CD8-positive, alpha-beta T cell (primary cell): ENCODE measurements at regions of chr11 and their contacts with region 1.

Region 1: DNA sequence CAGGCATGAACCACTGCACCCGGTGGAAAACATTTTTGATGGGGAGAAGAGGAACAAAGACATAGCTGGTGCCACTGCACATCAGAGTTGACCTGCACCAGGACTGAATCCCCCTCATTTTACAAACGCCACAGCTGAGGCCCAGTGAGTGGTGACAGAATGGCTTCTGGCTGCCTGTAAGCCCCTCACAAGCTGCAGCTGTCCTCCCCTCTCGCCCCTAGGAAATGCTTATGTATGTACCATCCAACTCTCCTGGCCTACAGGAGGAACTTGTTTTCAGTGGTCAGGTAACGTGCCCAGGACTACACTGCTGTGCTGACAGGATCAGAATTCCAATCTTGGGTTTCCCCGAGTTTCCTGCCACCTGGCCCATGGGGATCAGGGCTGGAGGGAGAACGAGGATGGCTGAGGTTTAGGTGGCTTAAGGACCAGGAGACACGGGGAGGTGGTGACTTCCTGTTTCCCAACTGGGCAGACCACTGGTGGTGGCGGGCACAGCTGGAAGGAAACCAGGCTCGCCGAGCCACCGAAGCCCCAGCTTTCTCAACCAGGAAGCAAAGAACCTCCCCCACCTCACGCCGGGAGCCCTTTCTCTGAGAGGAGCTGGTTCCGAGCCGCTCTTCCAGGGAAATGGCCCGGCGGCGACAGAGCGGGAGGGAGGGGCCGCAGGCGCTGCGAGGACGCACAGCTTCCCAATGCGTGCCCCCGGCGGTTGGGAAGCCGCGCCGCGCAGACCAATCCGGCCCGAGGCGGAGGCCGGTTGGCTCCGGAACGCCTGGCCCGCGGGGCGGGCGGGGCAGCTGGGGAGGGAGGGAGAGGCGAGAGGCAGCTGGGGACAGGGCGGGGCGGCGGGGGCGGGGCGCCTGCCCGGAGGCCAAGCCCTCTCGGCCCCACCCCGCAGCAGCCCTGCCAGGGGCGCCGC is 1.0 kb upstream of the LRFN4 start:
- DNase-seq: peak in 7 of 9 experiments; percentile 66 to 86 (median 77)
- ATAC-seq: peak; percentile 74
- H3K4me3 ChIP-seq: peak overlapping the region; percentile 62 to 80
- H3K4me3 Mint-ChIP-seq: peak overlapping the region; percentile 80
- H3K27ac ChIP-seq: peak overlapping the region; percentile 21 to 47
- H3K27ac Mint-ChIP-seq: peak overlapping the region; percentile 50
- H3K4me1 ChIP-seq: peaks cover 6% of the 10 kb centered on the region
- H3K4me1 Mint-ChIP-seq: peaks cover 8% of the 10 kb centered on the region
- H3K27me3 ChIP-seq: no peaks in the 10 kb centered on the region
- H3K27me3 Mint-ChIP-seq: no peaks in the 10 kb centered on the region
- CTCF ChIP-seq: no peak

Region 2: DNA sequence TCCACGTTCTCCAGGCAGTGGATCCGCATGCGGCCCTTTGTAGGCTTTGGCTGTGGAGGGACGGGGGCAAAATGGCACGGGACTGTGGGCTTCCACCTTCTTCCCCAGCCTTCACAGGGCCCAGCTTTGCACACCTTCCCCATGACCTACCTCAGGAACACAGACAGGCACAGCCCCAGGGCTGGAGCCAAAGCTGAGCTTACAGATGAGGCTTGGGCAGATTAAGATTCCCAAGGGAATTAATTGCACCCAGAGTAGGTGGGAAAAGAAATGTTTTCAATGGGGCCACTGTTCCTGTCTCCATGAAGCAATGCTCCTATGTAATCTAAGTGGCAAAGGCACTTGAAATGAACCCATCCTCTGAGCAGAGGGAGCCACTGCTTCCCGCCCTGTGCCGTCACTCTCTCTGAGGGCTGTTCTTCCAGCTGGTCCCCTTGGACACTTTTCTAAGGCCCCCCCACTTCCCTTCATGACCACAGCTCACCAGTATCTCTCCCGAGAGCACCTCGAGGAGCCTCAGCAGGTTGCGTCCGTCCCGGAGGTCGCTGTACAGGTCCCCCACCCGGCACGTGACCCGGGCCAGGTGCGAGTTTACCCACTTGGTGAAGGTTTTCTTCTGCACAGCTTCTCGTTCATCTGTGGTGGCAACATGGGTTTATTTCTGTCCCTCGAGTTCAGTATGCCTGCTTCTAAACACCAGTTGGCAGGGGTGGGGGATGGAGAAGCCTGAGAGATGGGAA is 140.3 kb before region 1 on chr11:
- CTCF ChIA-PET with region 1: no interaction called
- POLR2A ChIA-PET with region 1: no interaction called
- intact Hi-C with region 1: no loop called
- DNase-seq: no peak
- ATAC-seq: no peak
- H3K4me3 ChIP-seq: no peak overlapping the region
- H3K4me3 Mint-ChIP-seq: no peak overlapping the region
- H3K27ac ChIP-seq: no peak overlapping the region
- H3K27ac Mint-ChIP-seq: no peak overlapping the region
- H3K4me1 ChIP-seq: no peaks in the 10 kb centered on the region
- H3K4me1 Mint-ChIP-seq: peaks cover 2% of the 10 kb centered on the region
- H3K27me3 ChIP-seq: peaks cover 0 to 3% of the 10 kb centered on the region in 2 experiments
- H3K27me3 Mint-ChIP-seq: peaks cover 43% of the 10 kb centered on the region
- CTCF ChIP-seq: no peak

Region 3: GRCh38 chr11:66744485-66745340 is 111.1 kb before region 1 on chr11:
- CTCF ChIA-PET with region 1: no interaction called
- POLR2A ChIA-PET with region 1: no interaction called
- intact Hi-C with region 1: loop called in 1 of 2 experiments (anchors 5 kb)
- DNase-seq: peak; percentile 76 to 93 (median 87)
- ATAC-seq: peak; percentile 87
- H3K4me3 ChIP-seq: peak overlapping the region; percentile 81 to 92
- H3K4me3 Mint-ChIP-seq: peak overlapping the region; percentile 90
- H3K27ac ChIP-seq: peak overlapping the region; percentile 49 to 71
- H3K27ac Mint-ChIP-seq: peak overlapping the region; percentile 75
- H3K4me1 ChIP-seq: peaks cover 5% of the 10 kb centered on the region
- H3K4me1 Mint-ChIP-seq: peaks cover 3% of the 10 kb centered on the region
- H3K27me3 ChIP-seq: no peaks in the 10 kb centered on the region
- H3K27me3 Mint-ChIP-seq: no peaks in the 10 kb centered on the region
- CTCF ChIP-seq: no peak

Region 4: DNA sequence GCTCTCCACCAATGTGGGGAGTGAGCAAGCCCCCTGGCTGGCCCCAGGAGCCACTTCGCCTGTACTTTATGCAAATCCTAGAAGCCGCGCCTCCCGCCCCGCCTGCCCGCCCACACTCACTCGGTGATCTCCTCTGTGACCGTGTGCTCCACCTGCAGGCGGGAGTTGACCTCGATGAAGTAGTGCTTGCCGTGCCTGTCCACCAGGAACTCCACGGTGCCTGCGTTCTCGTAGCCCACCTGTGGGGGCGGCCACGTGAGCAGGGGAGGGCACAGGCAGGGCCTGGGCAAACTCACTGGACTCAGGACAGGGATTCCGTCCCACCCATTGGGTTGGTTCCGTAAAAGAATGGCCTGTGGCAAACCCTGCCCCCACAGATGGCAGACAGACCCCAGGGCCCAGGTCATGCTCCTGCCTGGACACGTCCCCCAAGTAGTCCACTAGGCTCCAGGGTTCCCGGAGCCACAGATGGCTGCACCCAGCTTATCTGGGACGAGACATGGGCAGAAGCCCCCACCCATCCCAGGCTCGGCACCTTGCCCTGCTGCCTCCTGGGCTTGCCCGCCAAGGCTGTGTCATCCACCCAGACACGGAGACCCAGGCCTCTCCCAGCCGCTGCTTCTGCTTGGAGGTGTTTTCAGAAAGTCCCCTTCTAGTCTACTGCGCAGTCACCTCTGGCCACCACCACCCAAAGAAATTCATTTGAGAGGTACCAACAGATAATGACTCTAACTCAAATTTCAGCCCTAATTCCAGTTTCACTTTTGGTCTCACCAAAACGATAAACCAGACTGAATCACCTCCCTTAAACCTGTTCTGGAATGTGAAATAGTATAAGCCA is 13.1 kb after region 1 on chr11:
- CTCF ChIA-PET with region 1: no interaction called
- POLR2A ChIA-PET with region 1: interaction called, 3 read pairs
- intact Hi-C with region 1: loop called in 1 of 2 experiments (anchors 1 kb)
- DNase-seq: peak; percentile 57 to 87 (median 81)
- ATAC-seq: peak; percentile 100
- H3K4me3 ChIP-seq: no peak overlapping the region
- H3K4me3 Mint-ChIP-seq: no peak overlapping the region
- H3K27ac ChIP-seq: no peak overlapping the region
- H3K27ac Mint-ChIP-seq: no peak overlapping the region
- H3K4me1 ChIP-seq: peaks cover 8% of the 10 kb centered on the region
- H3K4me1 Mint-ChIP-seq: peaks cover 9% of the 10 kb centered on the region
- H3K27me3 ChIP-seq: no peaks in the 10 kb centered on the region
- H3K27me3 Mint-ChIP-seq: no peaks in the 10 kb centered on the region
- CTCF ChIP-seq: peak; percentile 66

Region 5: GRCh38 chr11:66904055-66904454 is 48.2 kb after region 1 on chr11:
- CTCF ChIA-PET with region 1: no interaction called
- POLR2A ChIA-PET with region 1: no interaction called
- intact Hi-C with region 1: no loop called
- DNase-seq: no peak
- ATAC-seq: no peak
- H3K4me3 ChIP-seq: no peak overlapping the region
- H3K4me3 Mint-ChIP-seq: no peak overlapping the region
- H3K27ac ChIP-seq: no peak overlapping the region
- H3K27ac Mint-ChIP-seq: no peak overlapping the region
- H3K4me1 ChIP-seq: no peaks in the 10 kb centered on the region
- H3K4me1 Mint-ChIP-seq: no peaks in the 10 kb centered on the region
- H3K27me3 ChIP-seq: no peaks in the 10 kb centered on the region
- H3K27me3 Mint-ChIP-seq: no peaks in the 10 kb centered on the region
- CTCF ChIP-seq: no peak

Region 6: DNA sequence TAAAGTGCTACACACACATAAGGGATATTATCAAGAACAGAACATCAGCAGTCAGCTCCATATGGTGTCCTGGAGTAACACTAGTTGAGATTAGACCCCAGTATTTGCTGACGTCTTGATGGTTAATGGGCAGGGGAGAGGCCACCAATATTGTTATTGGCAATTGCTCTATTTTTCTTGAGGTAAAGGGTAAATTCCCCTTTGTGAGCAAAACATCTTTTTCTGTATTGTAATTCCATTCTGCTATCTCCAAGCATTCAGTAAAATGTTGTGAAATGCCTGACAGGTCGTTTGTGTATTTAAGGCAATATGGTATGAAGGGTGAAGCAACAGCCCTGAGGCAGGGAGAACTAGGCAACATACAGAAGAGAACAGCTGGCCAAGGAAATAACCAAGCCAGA is 80.5 kb after region 1 on chr11:
- CTCF ChIA-PET with region 1: no interaction called
- POLR2A ChIA-PET with region 1: no interaction called
- intact Hi-C with region 1: no loop called
- DNase-seq: no peak
- ATAC-seq: no peak
- H3K4me3 ChIP-seq: no peak overlapping the region
- H3K4me3 Mint-ChIP-seq: no peak overlapping the region
- H3K27ac ChIP-seq: no peak overlapping the region
- H3K27ac Mint-ChIP-seq: no peak overlapping the region
- H3K4me1 ChIP-seq: no peaks in the 10 kb centered on the region
- H3K4me1 Mint-ChIP-seq: no peaks in the 10 kb centered on the region
- H3K27me3 ChIP-seq: no peaks in the 10 kb centered on the region
- H3K27me3 Mint-ChIP-seq: no peaks in the 10 kb centered on the region
- CTCF ChIP-seq: no peak